ENCODE measurements at regions of chr1 and their contacts with region 1.

Region 1: DNA sequence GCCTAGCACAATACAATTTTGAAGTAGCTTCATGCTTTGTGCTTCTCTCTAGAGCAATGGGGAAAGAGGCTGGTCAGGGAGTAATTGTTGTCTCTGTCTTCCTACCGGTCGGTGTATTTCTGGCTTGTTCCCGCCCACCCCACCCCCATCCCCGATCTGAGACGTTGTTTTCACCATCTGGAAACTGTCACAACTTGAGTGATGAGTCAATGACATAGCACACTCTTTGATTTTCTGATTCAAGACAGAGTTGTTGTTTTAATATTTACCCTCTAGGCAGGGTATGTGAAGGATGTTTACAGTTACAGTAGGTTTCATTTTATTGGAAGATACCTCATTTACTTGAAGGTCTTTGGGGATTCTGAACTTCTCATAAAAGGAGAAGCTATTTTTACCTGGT is 7.0 kb downstream of the IL12RB2 start:
- DNase-seq: no peak
- ATAC-seq: no peak
- H3K4me3 ChIP-seq: no peak overlapping the region
- H3K27ac ChIP-seq: no peak overlapping the region
- H3K4me1 ChIP-seq: no peaks in the 10 kb centered on the region
- H3K27me3 ChIP-seq: peaks cover 0 to 10% of the 10 kb centered on the region in 2 experiments; a peak in 1 of 5 replicates
- CTCF ChIP-seq: no peak
- EP300 ChIP-seq: no peak
- POLR2A ChIP-seq: no peak
- RAD21 ChIP-seq: no peak

Region 2: GRCh38 chr1:67085326-67085725 is 229.4 kb before region 1 on chr1:
- CTCF ChIA-PET with region 1: no interaction called
- POLR2A ChIA-PET with region 1: no interaction called
- in situ Hi-C with region 1: no loop called
- intact Hi-C with region 1: no loop called
- DNase-seq: no peak
- ATAC-seq: no peak
- H3K4me3 ChIP-seq: no peak overlapping the region
- H3K27ac ChIP-seq: no peak overlapping the region
- H3K4me1 ChIP-seq: no peaks in the 10 kb centered on the region
- H3K27me3 ChIP-seq: peaks cover 0 to 4% of the 10 kb centered on the region in 2 experiments; a peak in 1 of 5 replicates
- CTCF ChIP-seq: no peak
- EP300 ChIP-seq: no peak
- POLR2A ChIP-seq: no peak
- RAD21 ChIP-seq: no peak

Region 3: DNA sequence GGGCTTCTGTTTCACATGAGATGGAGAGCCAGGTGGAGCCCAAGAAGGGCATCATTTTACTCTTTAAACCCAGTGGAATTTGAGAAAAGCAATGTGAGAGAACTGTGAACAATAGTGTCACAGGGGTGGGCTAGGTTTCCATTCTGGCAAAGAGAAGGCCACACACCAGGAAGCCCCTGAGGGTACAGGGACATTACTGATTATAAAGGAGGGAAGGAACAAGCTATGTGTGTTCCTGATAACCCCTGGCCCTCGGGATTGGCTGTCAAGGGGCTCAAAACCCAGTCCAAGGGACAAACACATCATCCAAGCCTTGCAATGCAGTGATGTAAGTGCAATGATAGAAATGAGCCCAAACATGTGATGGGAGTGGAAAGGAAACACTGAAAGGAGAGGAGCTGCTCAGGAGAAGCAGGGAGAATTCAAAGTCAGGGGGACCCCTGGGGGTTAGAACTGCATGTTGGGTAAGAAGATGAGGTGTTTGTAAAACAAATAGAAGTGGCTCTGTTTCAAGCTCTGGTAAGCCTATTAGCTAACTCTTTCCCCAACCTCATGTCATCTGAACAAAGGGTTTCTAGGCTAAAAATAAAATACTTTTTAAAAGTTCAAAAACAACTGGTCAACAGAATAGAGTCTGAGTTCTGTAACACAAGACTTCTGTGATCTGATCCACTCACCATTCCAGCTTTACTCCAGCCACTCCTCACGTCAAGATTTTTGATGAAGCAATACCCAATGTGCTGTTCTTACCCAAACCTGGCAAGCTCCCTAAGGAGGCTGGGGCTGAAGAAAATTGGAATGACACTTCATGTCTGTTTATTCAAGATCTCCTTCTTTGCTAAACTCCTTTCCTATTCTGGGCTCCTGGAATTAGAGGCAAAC is 58.2 kb before region 1 on chr1:
- CTCF ChIA-PET with region 1: no interaction called
- POLR2A ChIA-PET with region 1: no interaction called
- in situ Hi-C with region 1: no loop called
- intact Hi-C with region 1: loop called (anchors 2 kb)
- DNase-seq: no peak
- ATAC-seq: no peak
- H3K4me3 ChIP-seq: no peak overlapping the region
- H3K27ac ChIP-seq: no peak overlapping the region
- H3K4me1 ChIP-seq: no peaks in the 10 kb centered on the region
- H3K27me3 ChIP-seq: no peaks in the 10 kb centered on the region
- CTCF ChIP-seq: no peak
- EP300 ChIP-seq: no peak
- POLR2A ChIP-seq: no peak
- RAD21 ChIP-seq: no peak

Region 4: DNA sequence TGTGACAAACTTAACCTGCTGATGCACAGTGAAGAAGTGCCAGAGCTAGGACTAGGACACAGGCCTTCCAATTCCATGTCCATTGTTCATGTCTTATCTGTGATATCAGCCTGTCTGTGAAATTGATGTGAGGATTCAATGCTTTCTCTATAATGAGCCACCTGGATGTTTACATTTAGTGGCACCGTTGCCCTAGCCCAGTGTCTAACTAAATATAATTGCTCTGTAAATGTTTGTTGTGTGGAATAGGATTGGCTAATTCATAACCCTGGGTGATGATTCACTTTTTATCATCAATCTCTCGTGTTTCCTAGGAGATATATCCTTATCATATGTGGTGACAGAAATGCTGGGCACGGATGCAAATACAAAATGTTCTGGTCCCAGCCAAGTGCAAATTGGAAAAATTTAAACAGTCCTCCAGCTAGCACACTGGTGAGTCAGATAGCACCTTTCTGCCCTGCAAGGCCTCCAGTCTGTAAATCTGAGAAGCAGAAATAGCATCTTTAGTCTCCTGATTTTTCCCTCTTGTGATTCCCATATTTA is 565.4 kb after region 1 on chr1:
- CTCF ChIA-PET with region 1: no interaction called
- POLR2A ChIA-PET with region 1: no interaction called
- in situ Hi-C with region 1: no loop called
- intact Hi-C with region 1: no loop called
- DNase-seq: no peak
- ATAC-seq: no peak
- H3K4me3 ChIP-seq: no peak overlapping the region
- H3K27ac ChIP-seq: no peak overlapping the region
- H3K4me1 ChIP-seq: no peaks in the 10 kb centered on the region
- H3K27me3 ChIP-seq: no peaks in the 10 kb centered on the region
- CTCF ChIP-seq: no peak
- EP300 ChIP-seq: no peak
- POLR2A ChIP-seq: no peak
- RAD21 ChIP-seq: no peak

Measured in HepG2 (cell line).